Activated naive CD4-positive, alpha-beta T cell treated with anti-CD3 and anti-CD28 coated beads for 36 hours (primary cell): ENCODE measurements at regions of chr10 and their contacts with region 1.

Region 1: GRCh38 chr10:48551861-48552591 is 52.8 kb downstream of the ARHGAP22 start:
- DNase-seq: peak; percentile 36
- H3K4me3 Mint-ChIP-seq: no peak overlapping the region
- H3K27ac Mint-ChIP-seq: no peak overlapping the region
- H3K4me1 Mint-ChIP-seq: no peaks in the 10 kb centered on the region
- H3K27me3 Mint-ChIP-seq: peaks cover under 1% of the 10 kb centered on the region

Region 2: GRCh38 chr10:48608279-48608681 is 56.3 kb after region 1 on chr10:
- CTCF ChIA-PET with region 1: interaction called, 3 read pairs
- intact Hi-C with region 1: loop called (anchors 5 kb)
- DNase-seq: peak; percentile 45
- H3K4me3 Mint-ChIP-seq: no peak overlapping the region
- H3K27ac Mint-ChIP-seq: no peak overlapping the region
- H3K4me1 Mint-ChIP-seq: peaks cover 3% of the 10 kb centered on the region
- H3K27me3 Mint-ChIP-seq: peaks cover 43% of the 10 kb centered on the region

Region 3: GRCh38 chr10:49518982-49519578 is 967.1 kb after region 1 on chr10:
- CTCF ChIA-PET with region 1: no interaction called
- intact Hi-C with region 1: loop called (anchors 10 kb)
- DNase-seq: peak; percentile 30
- H3K4me3 Mint-ChIP-seq: no peak overlapping the region
- H3K27ac Mint-ChIP-seq: no peak overlapping the region
- H3K4me1 Mint-ChIP-seq: no peaks in the 10 kb centered on the region
- H3K27me3 Mint-ChIP-seq: no peaks in the 10 kb centered on the region